ENCODE measurements at regions of chr5 and their contacts with region 1.

Region 1: GRCh38 chr5:180315762-180316212 is 23.9 kb upstream of the MAPK9 start:
- DNase-seq: peak; percentile 63 to 83 (median 75)
- H3K4me3 ChIP-seq: no peak overlapping the region
- H3K27ac ChIP-seq: no peak overlapping the region
- H3K4me1 ChIP-seq: peaks cover 0 to 5% (median 0%) of the 10 kb centered on the region in 4 experiments
- H3K27me3 ChIP-seq: no peaks in the 10 kb centered on the region

Region 2: GRCh38 chr5:180126726-180127681 is 188.8 kb before region 1 on chr5:
- CTCF ChIA-PET with region 1: interaction called, 10 read pairs
- POLR2A ChIA-PET with region 1: no interaction called
- DNase-seq: peak; percentile 29 to 39 (median 36)
- H3K4me3 ChIP-seq: no peak overlapping the region
- H3K27ac ChIP-seq: no peak overlapping the region
- H3K4me1 ChIP-seq: peaks cover 0 to 8% (median 3%) of the 10 kb centered on the region in 4 experiments
- H3K27me3 ChIP-seq: peaks cover 0 to 8% (median 0%) of the 10 kb centered on the region in 5 experiments

Region 3: DNA sequence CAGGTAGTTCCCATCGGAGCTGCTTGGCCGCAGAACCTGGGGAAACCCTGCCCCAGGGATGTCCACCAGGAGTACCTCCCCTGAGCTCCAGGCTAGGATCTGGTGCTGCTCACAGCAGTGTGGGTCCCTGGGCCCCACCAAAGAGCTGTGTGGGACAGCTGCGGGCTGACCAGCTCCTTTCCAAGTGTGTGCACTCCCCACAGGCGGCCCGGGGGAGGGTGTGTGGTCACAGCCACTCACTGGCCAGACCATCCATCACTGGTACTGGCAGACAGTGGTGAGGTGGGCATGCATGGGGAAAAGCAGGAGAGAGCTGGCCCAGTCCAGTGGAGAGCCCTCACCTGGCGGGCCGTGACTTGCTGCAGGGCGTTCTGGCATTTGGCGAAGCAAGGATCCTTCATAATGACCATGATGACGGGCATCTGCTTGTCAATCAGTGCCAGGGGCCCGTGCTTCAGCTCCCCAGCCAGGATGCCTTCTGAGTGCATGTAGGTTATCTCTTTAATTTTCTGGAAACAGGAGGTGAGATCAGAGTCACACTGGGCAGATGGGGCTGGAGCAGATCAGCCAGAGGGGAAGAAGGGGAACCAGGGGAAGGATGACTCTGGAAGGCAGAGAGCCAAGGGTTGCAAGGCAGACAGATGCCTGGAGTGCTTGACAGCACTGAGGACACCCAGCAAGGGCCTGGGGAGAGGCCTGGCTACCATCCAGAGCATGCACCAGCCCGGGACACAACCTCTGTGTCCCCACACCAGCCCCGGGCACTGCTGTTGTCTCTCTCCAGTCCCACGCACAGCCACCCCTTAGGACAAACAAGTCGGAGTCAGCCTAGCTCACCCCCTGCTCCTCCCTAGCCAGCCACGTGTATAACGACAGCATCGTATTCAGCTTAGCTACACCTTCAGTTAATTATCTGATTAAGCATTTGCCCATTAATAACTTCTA is 11.1 kb before region 1 on chr5:
- CTCF ChIA-PET with region 1: interaction called, 12 read pairs
- POLR2A ChIA-PET with region 1: no interaction called
- DNase-seq: no peak
- H3K4me3 ChIP-seq: no peak overlapping the region
- H3K27ac ChIP-seq: no peak overlapping the region
- H3K4me1 ChIP-seq: no peaks in the 10 kb centered on the region
- H3K27me3 ChIP-seq: peaks cover 0 to 3% (median 0%) of the 10 kb centered on the region in 5 experiments

Region 4: DNA sequence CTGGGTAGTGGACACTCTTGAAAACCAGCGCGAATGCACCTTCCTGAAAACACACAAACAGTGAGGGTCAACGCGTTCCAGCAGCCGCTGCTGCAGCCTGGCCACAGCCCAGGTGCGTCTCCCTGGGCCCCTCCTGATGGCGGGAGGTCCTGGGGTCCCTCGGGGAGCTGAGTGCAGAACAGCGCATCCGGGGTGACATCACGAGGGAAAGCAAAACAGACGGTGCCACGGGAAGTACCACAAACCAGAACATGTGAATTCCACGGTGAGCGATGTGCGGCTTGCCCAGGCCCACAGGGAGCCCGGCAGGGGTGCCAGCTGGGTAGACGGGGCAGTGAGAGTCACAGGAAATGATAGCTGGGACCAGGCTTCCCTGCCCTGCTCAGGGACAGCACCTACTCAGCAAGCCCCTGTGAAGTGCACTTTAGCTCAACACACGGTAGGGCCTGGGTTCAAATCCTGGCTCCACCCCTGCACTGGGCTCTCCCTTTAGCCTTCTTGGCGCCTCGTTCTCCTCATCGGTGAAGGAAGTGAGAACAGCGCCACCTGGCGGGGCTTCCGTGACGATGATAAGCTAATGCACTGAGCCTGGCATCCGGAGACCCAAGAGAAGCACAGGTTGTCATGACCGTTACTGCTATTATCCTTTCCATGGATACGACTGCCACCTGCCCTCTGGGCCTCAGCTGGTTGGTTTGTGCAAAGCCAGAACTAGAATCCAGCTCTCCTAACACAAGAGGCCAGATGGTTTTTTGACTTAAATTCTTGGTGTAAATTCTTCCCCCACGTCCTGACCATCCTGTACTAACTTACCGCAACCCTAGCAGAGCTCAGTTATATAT is 12.7 kb after region 1 on chr5:
- CTCF ChIA-PET with region 1: interaction called, 39 read pairs
- POLR2A ChIA-PET with region 1: no interaction called
- DNase-seq: peak; percentile 76 to 90 (median 85)
- H3K4me3 ChIP-seq: no peak overlapping the region
- H3K27ac ChIP-seq: no peak overlapping the region
- H3K4me1 ChIP-seq: peaks cover 0 to 3% (median 0%) of the 10 kb centered on the region in 4 experiments
- H3K27me3 ChIP-seq: peaks cover 0 to 14% (median 4%) of the 10 kb centered on the region in 5 experiments

Measured in common myeloid progenitor, CD34-positive (primary cell).